Mammary epithelial cell (primary cell): ENCODE measurements at regions of chr19 and their contacts with region 1.

Region 1: DNA sequence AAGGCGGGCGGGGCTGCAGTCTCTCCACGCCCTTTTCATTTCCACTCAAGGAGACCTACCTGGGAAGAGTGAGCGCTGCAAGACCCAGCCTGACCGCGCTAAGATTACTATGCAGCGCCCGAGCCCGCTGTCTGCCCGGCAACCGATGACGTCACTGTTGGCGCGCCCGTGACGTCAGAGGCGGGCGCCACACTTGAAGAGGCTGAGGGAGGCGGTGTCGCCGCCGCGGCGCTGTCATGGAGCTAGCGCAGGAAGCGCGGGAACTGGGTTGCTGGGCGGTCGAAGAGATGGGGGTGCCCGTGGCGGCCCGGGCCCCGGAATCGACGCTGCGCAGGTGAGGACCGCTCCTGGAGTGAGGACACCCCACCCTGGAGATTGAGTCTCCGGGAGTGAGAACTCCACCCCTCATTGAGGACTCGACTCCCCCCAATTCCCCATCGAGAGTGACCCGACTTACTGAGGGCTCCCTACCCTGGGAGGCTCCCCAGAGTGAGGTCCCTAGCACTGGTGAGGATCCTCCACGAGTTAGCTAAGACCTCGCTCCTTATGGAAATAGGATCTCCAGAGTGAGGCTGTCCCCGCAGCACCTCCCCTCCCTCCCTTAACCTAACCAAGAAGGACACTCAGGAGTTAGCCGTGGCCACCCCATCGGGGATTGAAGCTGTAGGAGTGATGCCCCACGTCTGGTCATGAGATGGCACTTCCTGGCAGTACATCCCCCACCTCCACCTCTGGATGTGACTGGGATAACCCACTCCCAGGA is at the start of gene HAUS5:
- DNase-seq: peak; percentile 93
- H3K4me3 ChIP-seq: peak within 1 kb of the TSS; percentile 70 to 74 (median 73)
- H3K27ac ChIP-seq: peak within 1 kb of the TSS; percentile 85
- H3K4me1 ChIP-seq: peaks cover 4% of the 10 kb centered on the region
- H3K27me3 ChIP-seq: no peaks in the 10 kb centered on the region
- CTCF ChIP-seq: no peak
- total RNA-seq, gene HAUS5: 6.5 to 28.0 TPM

Region 2: DNA sequence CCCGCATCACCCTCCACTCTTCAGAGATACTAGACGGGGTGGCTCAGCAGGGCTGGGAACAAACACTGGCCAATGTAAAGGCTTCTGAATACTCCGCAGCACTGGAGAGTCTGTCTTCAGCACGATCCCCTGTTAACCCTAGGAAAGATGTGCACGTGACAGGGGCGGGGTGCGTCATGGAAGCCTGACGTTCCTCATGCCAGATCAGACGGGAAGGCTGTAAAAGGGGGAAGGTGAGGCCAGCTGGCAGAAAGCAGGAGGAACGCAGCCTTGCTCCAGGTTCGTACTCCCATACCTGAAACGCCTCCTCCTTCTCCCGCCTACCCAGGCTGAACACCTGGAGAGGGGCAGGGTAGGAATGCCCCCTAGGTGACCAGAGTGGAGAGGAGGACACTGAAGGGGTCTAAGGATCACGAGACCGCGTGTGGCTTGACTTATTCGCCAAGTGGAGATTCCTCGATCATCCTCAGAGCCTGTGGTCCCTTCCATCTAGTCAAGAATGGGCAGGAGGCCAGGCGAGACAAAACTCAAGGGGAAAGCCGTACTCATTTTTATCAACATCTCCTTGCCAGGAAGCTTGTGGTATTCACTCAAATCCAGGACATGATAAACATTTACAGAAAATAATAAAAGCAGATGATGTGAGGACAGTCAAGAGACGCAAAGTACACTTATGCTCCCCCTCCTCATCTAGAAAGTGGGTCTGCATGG is 182.9 kb before region 1 on chr19:
- CTCF ChIA-PET with region 1: no interaction called
- dilution Hi-C with region 1: no loop called
- in situ Hi-C with region 1: no loop called
- intact Hi-C with region 1: no loop called
- DNase-seq: no peak
- H3K4me3 ChIP-seq: no peak overlapping the region
- H3K27ac ChIP-seq: no peak overlapping the region
- H3K4me1 ChIP-seq: no peaks in the 10 kb centered on the region
- H3K27me3 ChIP-seq: no peaks in the 10 kb centered on the region
- CTCF ChIP-seq: no peak

Region 3: DNA sequence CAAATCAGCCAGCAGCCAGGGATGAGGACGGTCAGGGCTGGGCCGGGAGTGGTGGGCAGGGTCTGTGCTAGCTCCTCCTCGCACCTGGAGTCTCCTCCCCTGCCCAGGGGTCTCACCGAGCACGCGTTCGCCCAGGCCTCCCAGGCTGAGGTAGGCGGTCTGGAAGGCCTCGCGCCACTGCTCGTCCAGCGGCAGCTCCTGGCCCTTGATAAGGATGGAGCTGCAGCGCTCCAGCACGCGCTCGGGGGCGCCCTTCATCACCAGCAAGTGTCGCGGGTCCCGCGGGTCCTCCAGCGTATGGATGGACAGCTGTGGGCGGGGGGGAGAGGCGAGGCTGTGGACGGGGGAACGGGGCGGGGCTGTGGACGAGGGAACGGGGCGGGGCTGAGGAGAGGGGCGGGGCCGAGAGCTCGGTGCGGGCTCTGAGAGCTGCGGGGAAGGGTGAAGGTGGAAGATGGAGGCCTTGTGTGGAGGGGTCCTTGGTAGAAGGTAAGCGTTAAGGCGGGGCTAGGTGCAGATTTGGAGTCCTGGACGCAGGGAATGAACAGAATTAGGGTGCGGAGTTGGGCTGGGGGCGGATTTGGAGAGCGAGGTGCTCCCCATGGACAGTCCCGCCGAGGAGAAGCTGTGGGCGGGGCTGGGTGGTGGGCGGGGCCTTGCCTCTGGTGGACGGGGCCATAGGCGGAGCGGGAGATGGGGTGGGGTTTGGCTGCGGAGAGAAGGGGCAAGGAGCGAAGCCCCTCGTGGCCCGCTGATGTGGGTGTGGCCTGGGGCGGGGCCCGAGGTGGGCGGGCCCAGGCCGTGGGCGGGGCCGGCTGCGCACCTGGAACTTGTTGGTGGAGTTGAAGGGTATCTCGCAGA is 55.0 kb before region 1 on chr19:
- CTCF ChIA-PET with region 1: no interaction called
- dilution Hi-C with region 1: loop called (anchors 5 kb)
- in situ Hi-C with region 1: no loop called
- intact Hi-C with region 1: no loop called
- DNase-seq: peak; percentile 52
- H3K4me3 ChIP-seq: peak overlapping the region; percentile 36 to 44 (median 43)
- H3K27ac ChIP-seq: no peak overlapping the region
- H3K4me1 ChIP-seq: peaks cover 10% of the 10 kb centered on the region
- H3K27me3 ChIP-seq: no peaks in the 10 kb centered on the region
- CTCF ChIP-seq: no peak

Region 4: DNA sequence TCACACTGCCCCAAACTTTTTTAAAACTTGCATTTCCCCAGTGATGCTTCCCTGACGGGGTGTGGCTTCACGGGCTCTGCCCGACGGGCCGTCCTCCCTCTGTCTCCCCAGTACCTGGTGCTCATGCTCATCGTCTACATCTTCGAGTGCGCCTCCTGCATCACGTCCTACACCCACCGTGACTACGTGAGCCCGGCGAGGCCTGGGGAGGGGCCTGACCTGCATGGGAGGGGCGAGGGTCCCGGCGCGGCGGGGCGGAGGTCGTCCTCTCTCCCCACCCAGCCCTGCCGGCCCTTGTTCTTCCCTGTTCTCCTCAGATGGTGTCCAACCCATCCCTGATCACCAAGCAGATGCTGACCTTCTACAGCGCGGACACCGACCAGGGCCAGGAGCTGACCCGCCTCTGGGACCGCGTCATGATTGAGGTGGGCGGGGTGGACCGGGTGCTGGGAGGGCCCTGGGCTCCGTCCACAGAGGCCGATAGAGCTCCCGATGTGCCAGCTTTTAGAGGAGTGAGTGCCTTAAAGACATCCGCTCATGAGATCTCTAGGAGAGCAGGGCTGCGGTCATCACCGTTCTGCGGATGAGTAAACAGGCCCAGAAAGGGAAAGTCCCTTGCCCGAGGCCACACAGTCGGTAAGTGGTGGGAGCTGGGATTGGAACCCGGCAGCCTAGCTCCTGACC is 60.5 kb after region 1 on chr19:
- CTCF ChIA-PET with region 1: no interaction called
- dilution Hi-C with region 1: loop called (anchors 5 kb)
- in situ Hi-C with region 1: no loop called
- intact Hi-C with region 1: no loop called
- DNase-seq: peak; percentile 84
- H3K4me3 ChIP-seq: peak overlapping the region; percentile 29 to 51 (median 48)
- H3K27ac ChIP-seq: no peak overlapping the region
- H3K4me1 ChIP-seq: peaks cover 4% of the 10 kb centered on the region
- H3K27me3 ChIP-seq: no peaks in the 10 kb centered on the region
- CTCF ChIP-seq: no peak